Activated T-helper 1 cell treated with anti-CD3 and anti-CD28 coated beads, Interleukin-12 subunit alpha, Interleukin-12 subunit beta, Interleukin-2, Interleukin-4 antibody, amounts not matched to agents 30 ng/mL and 10 ng/mL and 1 ng/mL, durations not matched to agents 14 hours and 24 hours and 36 hours (primary cell): ENCODE measurements at regions of chr12 and their contacts with region 1.

Region 1: DNA sequence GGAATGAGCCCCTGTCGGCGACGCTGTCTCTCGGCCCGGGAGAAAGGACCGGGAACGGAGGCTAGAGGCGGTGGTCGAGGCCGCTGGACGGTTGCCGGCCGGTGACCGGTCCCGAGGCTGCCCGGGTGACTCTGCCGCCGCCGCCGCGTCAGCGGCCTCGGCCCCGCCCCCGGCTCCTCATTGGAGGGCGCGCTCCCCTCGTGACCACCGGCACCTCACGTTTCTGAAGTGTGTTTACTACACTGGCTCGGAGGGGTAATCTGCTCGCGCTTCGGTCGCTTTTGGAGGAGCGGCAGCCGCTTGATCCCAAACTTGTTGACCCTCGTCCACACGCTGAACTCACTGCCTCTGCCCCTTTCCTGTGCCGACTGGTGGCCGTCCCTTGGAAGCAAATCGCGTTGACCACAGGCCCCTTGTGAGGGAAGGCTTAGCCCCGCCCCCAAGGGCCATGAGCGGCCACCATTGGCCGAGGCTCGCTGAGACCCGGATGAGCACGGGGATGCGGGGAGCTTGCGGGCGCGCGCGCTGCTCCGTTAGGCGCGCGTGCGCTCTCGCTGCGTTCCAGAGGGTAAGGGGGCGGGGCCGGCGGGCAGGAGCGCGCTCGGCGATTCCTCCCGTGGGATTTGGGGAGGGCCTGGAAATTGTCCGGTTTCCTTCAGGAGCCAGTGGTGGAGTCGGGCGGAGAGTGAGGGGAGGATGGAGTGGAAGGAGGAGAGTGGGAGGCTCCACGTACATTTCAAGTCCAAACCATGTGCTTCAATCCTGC is at the start of gene CRY1:
- DNase-seq: peak; percentile 89
- H3K4me3 Mint-ChIP-seq: no peak within 1 kb of the TSS
- H3K27ac Mint-ChIP-seq: no peak within 1 kb of the TSS
- H3K4me1 Mint-ChIP-seq: peaks cover 13% of the 10 kb centered on the region
- H3K27me3 Mint-ChIP-seq: peaks cover 10% of the 10 kb centered on the region
- total RNA-seq, gene CRY1: 23.4 and 23.5 TPM in 2 replicates

Region 2: GRCh38 chr12:106302401-106303201 is 791.0 kb before region 1 on chr12 and contains the start of gene TCP11L2:
- intact Hi-C with region 1: loop called (anchors 1 kb)
- DNase-seq: peak; percentile 83
- H3K4me3 Mint-ChIP-seq: peak within 1 kb of the TSS; percentile 93
- H3K27ac Mint-ChIP-seq: peak within 1 kb of the TSS; percentile 100
- H3K4me1 Mint-ChIP-seq: peaks cover 49% of the 10 kb centered on the region
- H3K27me3 Mint-ChIP-seq: no peaks in the 10 kb centered on the region
- total RNA-seq, gene TCP11L2: 4.0 and 4.3 TPM in 2 replicates

Region 3: DNA sequence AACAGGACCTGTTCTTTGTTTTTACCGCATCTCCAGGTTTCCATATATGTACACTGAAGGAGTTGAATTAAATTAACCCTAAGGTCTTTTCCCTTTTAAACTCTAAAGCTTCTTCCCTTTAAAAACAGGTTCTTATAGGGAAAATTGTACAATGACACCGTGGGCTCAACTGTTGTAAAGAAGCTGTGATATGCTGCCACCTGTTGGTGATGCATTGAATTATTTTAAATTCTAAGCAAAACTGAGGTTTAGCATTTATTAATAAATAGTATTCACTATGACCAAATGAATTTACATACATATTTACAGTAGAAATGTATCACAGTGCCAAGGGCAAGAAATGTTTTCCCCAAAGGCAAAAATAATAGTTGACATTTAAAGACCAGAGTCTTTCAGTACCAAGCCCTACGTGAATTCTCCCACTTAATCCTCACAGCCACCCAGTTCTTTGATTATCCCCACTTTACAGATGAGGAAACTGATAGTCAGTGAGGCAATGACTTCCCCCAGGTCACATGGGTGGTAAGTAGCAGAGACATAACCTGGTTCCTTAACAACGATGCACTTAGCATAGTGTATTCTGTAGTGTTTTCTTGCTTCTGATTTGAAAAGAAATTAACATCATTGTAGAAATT is 173.6 kb before region 1 on chr12:
- intact Hi-C with region 1: loop called (anchors 5 kb)
- DNase-seq: no peak
- H3K4me3 Mint-ChIP-seq: no peak overlapping the region
- H3K27ac Mint-ChIP-seq: no peak overlapping the region
- H3K4me1 Mint-ChIP-seq: peaks cover 9% of the 10 kb centered on the region
- H3K27me3 Mint-ChIP-seq: peaks cover 11% of the 10 kb centered on the region

Region 4: DNA sequence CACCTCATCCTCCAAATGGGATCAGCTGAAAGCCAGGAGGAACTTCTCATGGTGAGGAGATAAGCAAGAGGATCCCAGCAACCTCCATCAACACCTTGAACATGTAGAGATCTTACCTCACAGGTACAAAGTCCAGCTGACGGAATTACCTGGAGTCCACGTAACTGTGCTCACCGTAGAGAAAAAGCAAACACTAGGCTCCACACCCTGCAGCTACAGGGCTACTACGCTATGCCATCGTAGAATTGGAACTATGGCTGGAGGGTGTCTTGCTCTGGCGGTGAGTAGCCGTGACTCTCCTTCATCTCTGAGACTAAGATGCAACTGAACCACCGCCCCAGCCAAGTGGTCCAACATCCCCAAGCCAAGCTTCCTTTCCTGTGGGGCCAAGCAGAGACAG is 50.8 kb before region 1 on chr12:
- intact Hi-C with region 1: no loop called
- DNase-seq: no peak
- H3K4me3 Mint-ChIP-seq: no peak overlapping the region
- H3K27ac Mint-ChIP-seq: no peak overlapping the region
- H3K4me1 Mint-ChIP-seq: peaks cover 6% of the 10 kb centered on the region
- H3K27me3 Mint-ChIP-seq: no peaks in the 10 kb centered on the region

Region 5: DNA sequence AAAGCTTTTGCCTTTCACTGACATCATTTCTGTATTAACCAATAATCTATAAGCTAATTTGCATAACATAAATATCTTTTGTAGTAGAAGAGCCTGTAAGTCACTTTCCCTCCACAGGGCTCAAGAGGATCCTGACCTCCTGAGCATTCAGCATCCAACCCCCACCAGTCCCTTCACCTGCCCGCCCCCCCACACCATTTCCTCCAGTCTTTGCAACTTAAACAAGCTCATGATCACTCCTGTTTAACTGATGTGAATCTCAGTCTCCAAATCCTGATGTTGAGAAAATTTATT is 11.8 kb after region 1 on chr12:
- intact Hi-C with region 1: loop called (anchors 1 kb)
- DNase-seq: no peak
- H3K4me3 Mint-ChIP-seq: no peak overlapping the region
- H3K27ac Mint-ChIP-seq: no peak overlapping the region
- H3K4me1 Mint-ChIP-seq: no peaks in the 10 kb centered on the region
- H3K27me3 Mint-ChIP-seq: peaks cover 22% of the 10 kb centered on the region

Region 6: DNA sequence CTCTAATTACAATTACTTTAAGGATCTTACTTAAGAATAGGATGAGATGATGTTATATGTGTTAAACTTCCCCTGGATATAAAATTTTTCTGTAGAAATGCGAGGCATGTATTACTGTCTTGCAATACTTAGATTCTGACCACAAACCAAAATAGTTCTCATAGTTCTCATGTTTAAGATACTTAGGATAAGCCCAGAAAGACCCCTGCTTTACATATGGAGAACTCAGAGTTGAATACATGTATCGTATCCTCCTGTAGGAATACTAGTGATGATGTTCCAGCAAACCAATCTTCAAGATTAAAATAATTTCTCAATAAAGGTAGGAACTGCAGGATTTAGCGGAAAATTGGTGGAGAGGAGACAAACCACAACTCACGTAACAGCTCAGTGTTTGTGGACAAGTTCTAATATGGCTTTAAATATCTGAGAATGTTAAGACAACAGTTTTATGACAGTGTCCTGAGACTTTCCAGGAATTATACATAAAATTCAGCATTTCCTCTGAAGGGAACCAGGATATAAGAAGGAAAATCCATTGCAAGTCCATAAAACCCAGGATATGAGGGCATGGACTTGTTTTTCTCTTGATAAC is 114.4 kb after region 1 on chr12:
- intact Hi-C with region 1: no loop called
- DNase-seq: no peak
- H3K4me3 Mint-ChIP-seq: no peak overlapping the region
- H3K27ac Mint-ChIP-seq: no peak overlapping the region
- H3K4me1 Mint-ChIP-seq: no peaks in the 10 kb centered on the region
- H3K27me3 Mint-ChIP-seq: peaks cover 5% of the 10 kb centered on the region

Region 7: GRCh38 chr12:107311682-107312081 is 218.1 kb after region 1 on chr12:
- intact Hi-C with region 1: no loop called
- DNase-seq: no peak
- H3K4me3 Mint-ChIP-seq: no peak overlapping the region
- H3K27ac Mint-ChIP-seq: no peak overlapping the region
- H3K4me1 Mint-ChIP-seq: peaks cover 18% of the 10 kb centered on the region
- H3K27me3 Mint-ChIP-seq: peaks cover 34% of the 10 kb centered on the region

Region 8: GRCh38 chr12:107359342-107359741 is 265.7 kb after region 1 on chr12:
- intact Hi-C with region 1: no loop called
- DNase-seq: no peak
- H3K4me3 Mint-ChIP-seq: no peak overlapping the region
- H3K27ac Mint-ChIP-seq: no peak overlapping the region
- H3K4me1 Mint-ChIP-seq: peaks cover 54% of the 10 kb centered on the region
- H3K27me3 Mint-ChIP-seq: peaks cover 2% of the 10 kb centered on the region

Region 9: GRCh38 chr12:107372229-107372658 is 278.6 kb after region 1 on chr12:
- intact Hi-C with region 1: loop called (anchors 1 kb)
- DNase-seq: peak; percentile 42
- H3K4me3 Mint-ChIP-seq: peak overlapping the region; percentile 52
- H3K27ac Mint-ChIP-seq: peak overlapping the region; percentile 87
- H3K4me1 Mint-ChIP-seq: peaks cover 75% of the 10 kb centered on the region
- H3K27me3 Mint-ChIP-seq: no peaks in the 10 kb centered on the region

Region 10: GRCh38 chr12:107760809-107761501 is 667.4 kb after region 1 on chr12 and contains the start of gene PRDM4:
- intact Hi-C with region 1: loop called (anchors 1 kb)
- DNase-seq: peak; percentile 91
- H3K4me3 Mint-ChIP-seq: peak within 1 kb of the TSS; percentile 92
- H3K27ac Mint-ChIP-seq: peak within 1 kb of the TSS; percentile 89
- H3K4me1 Mint-ChIP-seq: peaks cover 40% of the 10 kb centered on the region
- H3K27me3 Mint-ChIP-seq: peaks cover 3% of the 10 kb centered on the region
- total RNA-seq, gene PRDM4: 28.1 and 30.2 TPM in 2 replicates